ENCODE measurements at regions of chr1 and their contacts with region 1.

Region 1: GRCh38 chr1:51192213-51192843 is 43.7 kb upstream of the RNF11 start:
- DNase-seq: peak; percentile 47 to 78 (median 63)
- H3K4me3 ChIP-seq: no peak overlapping the region
- H3K4me3 Mint-ChIP-seq: no peak overlapping the region
- H3K27ac ChIP-seq: no peak overlapping the region
- H3K27ac Mint-ChIP-seq: no peak overlapping the region
- H3K4me1 ChIP-seq: peaks cover 0 to 6% of the 10 kb centered on the region in 2 donors
- H3K4me1 Mint-ChIP-seq: no peaks in the 10 kb centered on the region
- H3K27me3 ChIP-seq: no peaks in the 10 kb centered on the region
- H3K27me3 Mint-ChIP-seq: peaks cover 0 to 3% (median 0%) of the 10 kb centered on the region in 3 donors
- CTCF ChIP-seq: peak; percentile 91

Region 2: GRCh38 chr1:50774759-50775351 is 417.5 kb before region 1 on chr1:
- intact Hi-C with region 1: loop called (anchors 5 kb)
- DNase-seq: peak; percentile 3 to 47 (median 25)
- H3K4me3 ChIP-seq: no peak overlapping the region
- H3K4me3 Mint-ChIP-seq: no peak overlapping the region
- H3K27ac ChIP-seq: no peak overlapping the region
- H3K27ac Mint-ChIP-seq: no peak overlapping the region
- H3K4me1 ChIP-seq: peaks cover 0 to 2% of the 10 kb centered on the region in 2 donors
- H3K4me1 Mint-ChIP-seq: peaks cover 3% of the 10 kb centered on the region
- H3K27me3 ChIP-seq: no peaks in the 10 kb centered on the region
- H3K27me3 Mint-ChIP-seq: no peaks in the 10 kb centered on the region
- CTCF ChIP-seq: peak; percentile 81

Region 3: GRCh38 chr1:50929376-50929958 is 262.9 kb before region 1 on chr1:
- intact Hi-C with region 1: loop called in 1 of 2 experiments (anchors 10 kb)
- DNase-seq: peak in 2 of 3 donors; percentile 11 to 32
- H3K4me3 ChIP-seq: no peak overlapping the region
- H3K4me3 Mint-ChIP-seq: no peak overlapping the region
- H3K27ac ChIP-seq: no peak overlapping the region
- H3K27ac Mint-ChIP-seq: no peak overlapping the region
- H3K4me1 ChIP-seq: no peaks in the 10 kb centered on the region
- H3K4me1 Mint-ChIP-seq: peaks cover 4% of the 10 kb centered on the region
- H3K27me3 ChIP-seq: no peaks in the 10 kb centered on the region
- H3K27me3 Mint-ChIP-seq: no peaks in the 10 kb centered on the region
- CTCF ChIP-seq: peak; percentile 71

Region 4: GRCh38 chr1:51088488-51088887 is 103.8 kb before region 1 on chr1:
- intact Hi-C with region 1: loop called (anchors 2 to 5 kb)
- DNase-seq: peak; percentile 8 to 45 (median 30)
- H3K4me3 ChIP-seq: no peak overlapping the region
- H3K4me3 Mint-ChIP-seq: no peak overlapping the region
- H3K27ac ChIP-seq: no peak overlapping the region
- H3K27ac Mint-ChIP-seq: no peak overlapping the region
- H3K4me1 ChIP-seq: peaks cover 6 to 8% of the 10 kb centered on the region in 2 donors
- H3K4me1 Mint-ChIP-seq: peaks cover 7% of the 10 kb centered on the region
- H3K27me3 ChIP-seq: peaks cover 1 to 19% of the 10 kb centered on the region in 2 donors
- H3K27me3 Mint-ChIP-seq: peaks cover 9 to 33% (median 23%) of the 10 kb centered on the region in 3 donors
- CTCF ChIP-seq: peak; percentile 69

Region 5: GRCh38 chr1:51296383-51297357 is 104.3 kb after region 1 on chr1:
- intact Hi-C with region 1: loop called in 1 of 2 experiments (anchors 5 kb)
- DNase-seq: peak; percentile 46 to 73 (median 66)
- H3K4me3 ChIP-seq: peak overlapping the region; percentile 35 to 79 (median 47)
- H3K4me3 Mint-ChIP-seq: peak overlapping the region; percentile 75 to 87
- H3K27ac ChIP-seq: no peak overlapping the region
- H3K27ac Mint-ChIP-seq: peak overlapping the region in 2 of 7 donors; percentile 22 to 25
- H3K4me1 ChIP-seq: peaks cover 9 to 12% of the 10 kb centered on the region in 2 donors
- H3K4me1 Mint-ChIP-seq: peaks cover 14% of the 10 kb centered on the region
- H3K27me3 ChIP-seq: no peaks in the 10 kb centered on the region
- H3K27me3 Mint-ChIP-seq: peaks cover 0 to 5% (median 2%) of the 10 kb centered on the region in 3 donors
- CTCF ChIP-seq: peak; percentile 97

Region 6: DNA sequence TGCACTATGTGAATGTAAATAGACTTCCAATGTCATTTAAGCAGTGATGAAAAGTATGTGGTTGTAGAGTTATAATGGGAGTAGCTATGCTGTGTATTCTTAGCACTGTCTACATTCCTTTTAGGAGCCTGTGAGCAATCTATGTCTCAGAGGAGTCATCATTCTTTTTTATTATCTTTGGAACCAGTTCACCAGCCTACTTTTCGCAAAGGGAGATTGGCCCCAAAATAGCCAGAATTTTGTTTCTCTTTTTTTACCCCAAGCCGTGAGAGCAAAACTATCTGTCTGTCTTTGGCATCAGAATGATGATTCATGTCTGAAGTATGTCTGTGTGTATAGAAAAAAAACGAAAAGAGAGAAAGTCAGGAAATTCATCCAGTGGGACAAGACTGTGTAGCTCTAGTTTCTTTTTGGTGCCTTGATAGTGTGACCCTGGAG is 468.8 kb after region 1 on chr1:
- intact Hi-C with region 1: no loop called
- DNase-seq: no peak
- H3K4me3 ChIP-seq: no peak overlapping the region
- H3K4me3 Mint-ChIP-seq: no peak overlapping the region
- H3K27ac ChIP-seq: no peak overlapping the region
- H3K27ac Mint-ChIP-seq: peak overlapping the region in 1 of 7 donors; percentile 4
- H3K4me1 ChIP-seq: peaks cover 3 to 4% of the 10 kb centered on the region in 2 donors
- H3K4me1 Mint-ChIP-seq: peaks cover 13% of the 10 kb centered on the region
- H3K27me3 ChIP-seq: no peaks in the 10 kb centered on the region
- H3K27me3 Mint-ChIP-seq: peaks cover 0 to 2% (median 2%) of the 10 kb centered on the region in 3 donors
- CTCF ChIP-seq: no peak

Measured in CD14-positive monocyte (primary cell).